ENCODE measurements at regions of chr9 and their contacts with region 1.

Region 1: GRCh38 chr9:113410207-113410864 is at the starts of genes C9orf43 and POLE3:
- DNase-seq: peak; percentile 67
- ATAC-seq: peak; percentile 98
- H3K4me3 ChIP-seq: peak within 1 kb of the TSS; percentile 95 to 97
- H3K27ac ChIP-seq: peak within 1 kb of the TSS; percentile 99
- H3K4me1 ChIP-seq: no peaks in the 10 kb centered on the region; the same call in 1 of the 2 replicates
- H3K27me3 ChIP-seq: no peaks in the 10 kb centered on the region
- CTCF ChIP-seq: no peak
- total RNA-seq, gene C9orf43: 1.2 TPM
- total RNA-seq, gene POLE3: 48.5 TPM

Region 2: DNA sequence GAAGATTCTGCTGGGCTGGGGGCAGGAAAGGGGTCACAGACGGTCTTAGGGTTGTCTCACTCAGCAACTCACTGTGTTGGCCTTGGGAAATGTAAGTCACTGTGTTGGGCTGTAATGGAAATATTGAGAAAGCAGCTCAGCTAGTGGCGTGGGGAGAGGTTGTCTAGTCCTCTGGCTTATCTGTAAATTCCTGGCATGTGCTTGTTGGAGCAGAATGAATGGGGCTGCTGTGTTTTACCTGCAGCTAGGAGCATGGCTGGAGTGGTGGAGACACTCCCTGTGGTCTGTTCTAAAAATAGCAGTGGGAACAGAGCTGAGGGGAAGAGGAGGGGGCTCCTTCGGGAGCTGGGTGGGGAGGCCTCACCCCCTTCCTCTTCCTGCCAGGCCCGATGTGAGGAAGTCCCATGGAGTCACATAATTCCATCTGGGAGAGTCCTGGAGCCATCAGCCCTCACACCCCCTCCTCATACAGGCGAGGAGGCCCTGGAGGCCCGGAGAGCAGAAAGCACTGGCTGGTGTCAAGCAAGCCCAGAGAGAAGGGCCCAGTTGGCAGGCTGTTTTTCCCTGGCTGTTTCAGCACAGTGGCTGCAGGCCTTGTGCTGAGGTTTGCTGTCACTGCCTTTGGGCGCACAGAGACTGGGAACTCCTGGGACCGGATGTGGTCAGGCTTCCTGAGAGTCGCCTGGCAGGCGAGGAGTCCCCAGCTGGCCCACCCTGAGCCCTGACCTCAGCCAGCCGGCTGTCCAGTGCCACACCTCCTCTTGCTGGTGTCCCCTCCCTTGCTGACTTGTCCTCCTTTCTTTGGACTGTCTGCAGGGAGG is 138.1 kb after region 1 on chr9:
- CTCF ChIA-PET with region 1: no interaction called
- POLR2A ChIA-PET with region 1: interaction called, 11 read pairs
- in situ Hi-C with region 1: no loop called
- intact Hi-C with region 1: no loop called
- DNase-seq: no peak
- ATAC-seq: peak; percentile 48; the same call in 1 of the 2 replicates
- H3K4me3 ChIP-seq: no peak overlapping the region
- H3K27ac ChIP-seq: no peak overlapping the region
- H3K4me1 ChIP-seq: no peaks in the 10 kb centered on the region
- H3K27me3 ChIP-seq: no peaks in the 10 kb centered on the region
- CTCF ChIP-seq: no peak

Measured in Panc1 (cell line).